HCT116 (cell line): ENCODE measurements at regions of chr16 and their contacts with region 1.

Region 1: GRCh38 chr16:23182460-23183309 is at the start of gene SCNN1G:
- DNase-seq: peak; percentile 57
- ATAC-seq: peak; percentile 99
- H3K4me3 ChIP-seq: no peak within 1 kb of the TSS
- H3K27ac ChIP-seq: no peak within 1 kb of the TSS
- H3K4me1 ChIP-seq: peaks cover 0 to 4% of the 10 kb centered on the region in 2 experiments; a peak in 2 of 4 replicates
- H3K27me3 ChIP-seq: peaks cover 27% of the 10 kb centered on the region; the same call in 1 of the 2 replicates
- CTCF ChIP-seq: peak; percentile 87 to 98 (median 92)
- POLR2A ChIP-seq: no peak
- RAD21 ChIP-seq: peak; percentile 89
- total RNA-seq, gene SCNN1G: not detected

Region 2: DNA sequence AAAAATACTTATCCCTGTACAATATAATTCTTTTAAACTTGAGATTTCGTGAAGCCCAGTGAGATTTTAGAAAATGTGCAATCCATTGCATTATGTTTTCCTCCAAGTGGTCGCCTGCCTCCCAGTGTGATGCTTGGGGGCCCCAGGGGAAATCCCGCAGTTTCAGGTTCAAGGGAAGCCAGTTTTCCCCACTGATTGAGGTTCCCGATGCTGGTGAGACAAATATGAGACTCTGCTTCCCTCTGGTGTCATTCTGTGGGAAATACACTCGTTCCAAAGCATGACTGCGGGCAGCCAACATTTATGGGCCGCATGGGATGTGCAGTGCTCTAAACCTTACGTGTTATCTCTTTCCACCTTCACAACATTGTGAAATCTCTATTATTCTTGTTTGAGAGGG is 853.9 kb after region 1 on chr16:
- CTCF ChIA-PET with region 1: no interaction called
- POLR2A ChIA-PET with region 1: no interaction called
- RAD21 ChIA-PET with region 1: no interaction called
- intact Hi-C with region 1: loop called (anchors 5 kb)
- DNase-seq: peak; percentile 29
- ATAC-seq: peak; percentile 86
- H3K4me3 ChIP-seq: no peak overlapping the region
- H3K27ac ChIP-seq: no peak overlapping the region
- H3K4me1 ChIP-seq: no peaks in the 10 kb centered on the region
- H3K27me3 ChIP-seq: no peaks in the 10 kb centered on the region
- CTCF ChIP-seq: peak; percentile 61 to 79 (median 65)
- POLR2A ChIP-seq: no peak
- RAD21 ChIP-seq: peak; percentile 88